ENCODE measurements at regions of chr13 and their contacts with region 1.

Region 1: DNA sequence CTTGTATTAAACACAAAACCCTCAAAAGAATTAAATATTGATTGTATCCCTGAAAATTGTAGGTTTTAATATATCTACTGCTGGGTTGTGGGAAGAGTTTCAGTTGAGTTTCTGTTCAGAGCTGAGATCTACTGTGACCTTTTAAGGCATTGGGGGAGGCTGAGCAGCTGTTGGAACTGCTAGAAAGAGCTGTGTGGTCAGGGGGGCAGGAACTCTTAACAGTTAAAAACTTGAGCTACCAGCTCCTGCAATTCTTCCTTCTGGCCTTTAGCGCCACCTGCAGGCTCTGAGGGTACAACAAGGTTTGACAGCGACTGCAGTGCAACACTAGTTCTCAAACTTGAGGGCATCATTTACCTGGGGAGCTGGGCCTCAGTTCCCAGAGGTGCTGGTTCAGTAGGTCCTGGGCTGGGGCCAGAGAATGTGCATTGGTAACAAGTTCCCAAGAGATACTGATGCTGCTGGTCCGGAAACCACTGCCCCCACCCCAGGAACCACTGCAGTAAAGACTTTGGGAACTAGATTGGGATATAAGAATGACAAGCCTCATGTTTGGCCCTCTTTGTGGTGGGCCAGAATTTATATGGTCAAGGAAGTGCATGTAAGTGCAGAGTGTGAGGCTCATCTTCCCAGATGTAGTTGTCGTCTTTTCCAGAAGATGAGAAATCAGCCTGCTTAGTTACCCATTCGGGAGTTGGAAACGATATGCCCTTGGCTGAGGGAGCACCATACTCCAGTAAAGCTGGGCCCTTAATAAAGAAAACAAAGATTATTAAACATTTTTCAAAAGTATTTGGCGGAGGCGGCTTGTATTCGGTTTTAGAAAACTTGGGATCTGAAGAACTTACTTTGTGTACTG is 2.6 kb downstream of the RNASEH2B start:
- DNase-seq: peak; percentile 29
- H3K4me3 ChIP-seq: no peak overlapping the region
- CTCF ChIP-seq: peak; percentile 82

Region 2: GRCh38 chr13:50376895-50377575 is 535.1 kb before region 1 on chr13:
- CTCF ChIA-PET with region 1: no interaction called
- POLR2A ChIA-PET with region 1: no interaction called
- DNase-seq: no peak
- H3K4me3 ChIP-seq: no peak overlapping the region
- CTCF ChIP-seq: no peak

Region 3: GRCh38 chr13:50617134-50617721 is 294.9 kb before region 1 on chr13:
- CTCF ChIA-PET with region 1: no interaction called
- POLR2A ChIA-PET with region 1: no interaction called
- DNase-seq: peak; percentile 57
- H3K4me3 ChIP-seq: no peak overlapping the region
- CTCF ChIP-seq: no peak

Region 4: GRCh38 chr13:50893211-50893852 is 18.8 kb before region 1 on chr13:
- CTCF ChIA-PET with region 1: interaction called, 15 read pairs
- POLR2A ChIA-PET with region 1: no interaction called
- DNase-seq: no peak
- H3K4me3 ChIP-seq: no peak overlapping the region
- CTCF ChIP-seq: no peak

Region 5: DNA sequence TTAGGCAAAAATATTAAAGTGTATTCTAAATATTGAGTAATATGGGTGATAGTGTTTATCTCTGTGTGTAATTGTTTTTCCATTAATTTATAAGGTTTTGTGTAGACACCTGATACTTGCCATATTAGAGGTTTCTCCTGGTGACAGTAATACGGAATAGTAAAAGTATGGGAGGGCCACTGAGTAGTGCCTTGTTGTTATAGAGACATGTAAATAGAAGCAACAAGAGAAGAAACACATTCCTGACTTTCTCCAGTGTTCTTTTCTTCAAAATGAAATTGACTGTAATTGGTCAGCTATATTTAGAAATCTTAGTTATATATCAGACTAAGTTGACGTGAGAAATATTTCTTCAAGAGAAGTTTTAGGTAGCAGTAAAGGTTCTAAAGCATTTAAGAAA is 15.9 kb after region 1 on chr13:
- CTCF ChIA-PET with region 1: interaction called, 52 read pairs
- POLR2A ChIA-PET with region 1: interaction called, 3 read pairs
- DNase-seq: no peak
- H3K4me3 ChIP-seq: no peak overlapping the region
- CTCF ChIP-seq: no peak

Measured in AG04449 (cell line).